ENCODE measurements at regions of chr2 and their contacts with region 1.

Region 1: DNA sequence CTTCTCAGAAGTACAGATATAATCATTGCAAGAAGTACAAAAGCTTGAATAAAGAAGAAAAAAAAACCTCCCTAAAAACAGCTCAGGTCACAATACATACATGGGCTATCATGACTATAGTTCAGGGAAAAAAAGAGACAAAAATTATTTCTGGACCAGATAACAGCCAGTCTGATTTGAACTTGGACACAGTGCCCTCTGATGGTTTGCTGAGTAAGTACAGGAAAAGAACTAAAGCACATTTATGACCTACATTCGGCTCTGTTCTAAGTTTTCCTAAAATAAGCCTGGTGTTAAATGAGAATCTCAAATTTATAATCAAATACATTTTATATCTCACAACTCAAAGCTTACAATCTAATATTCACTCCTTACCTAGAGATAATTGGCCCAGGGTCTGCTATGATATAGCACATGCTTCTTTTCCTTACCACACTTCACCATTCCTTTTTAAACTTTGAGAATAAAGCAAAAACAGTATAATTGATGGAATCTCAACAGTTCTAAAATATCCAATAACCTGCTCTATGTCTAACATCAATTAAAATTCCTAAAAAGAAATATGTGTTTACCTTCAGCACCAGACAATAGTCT is 81.1 kb downstream of the RAPH1 start:
- DNase-seq: peak; percentile 45
- ATAC-seq: peak; percentile 77
- H3K4me3 ChIP-seq: no peak overlapping the region
- H3K27ac ChIP-seq: no peak overlapping the region
- H3K4me1 ChIP-seq: peaks cover 11 to 15% of the 10 kb centered on the region in 2 experiments
- H3K27me3 ChIP-seq: no peaks in the 10 kb centered on the region
- CTCF ChIP-seq: peak; percentile 61 to 82 (median 65)
- POLR2A ChIP-seq: no peak
- RAD21 ChIP-seq: peak; percentile 88

Region 2: DNA sequence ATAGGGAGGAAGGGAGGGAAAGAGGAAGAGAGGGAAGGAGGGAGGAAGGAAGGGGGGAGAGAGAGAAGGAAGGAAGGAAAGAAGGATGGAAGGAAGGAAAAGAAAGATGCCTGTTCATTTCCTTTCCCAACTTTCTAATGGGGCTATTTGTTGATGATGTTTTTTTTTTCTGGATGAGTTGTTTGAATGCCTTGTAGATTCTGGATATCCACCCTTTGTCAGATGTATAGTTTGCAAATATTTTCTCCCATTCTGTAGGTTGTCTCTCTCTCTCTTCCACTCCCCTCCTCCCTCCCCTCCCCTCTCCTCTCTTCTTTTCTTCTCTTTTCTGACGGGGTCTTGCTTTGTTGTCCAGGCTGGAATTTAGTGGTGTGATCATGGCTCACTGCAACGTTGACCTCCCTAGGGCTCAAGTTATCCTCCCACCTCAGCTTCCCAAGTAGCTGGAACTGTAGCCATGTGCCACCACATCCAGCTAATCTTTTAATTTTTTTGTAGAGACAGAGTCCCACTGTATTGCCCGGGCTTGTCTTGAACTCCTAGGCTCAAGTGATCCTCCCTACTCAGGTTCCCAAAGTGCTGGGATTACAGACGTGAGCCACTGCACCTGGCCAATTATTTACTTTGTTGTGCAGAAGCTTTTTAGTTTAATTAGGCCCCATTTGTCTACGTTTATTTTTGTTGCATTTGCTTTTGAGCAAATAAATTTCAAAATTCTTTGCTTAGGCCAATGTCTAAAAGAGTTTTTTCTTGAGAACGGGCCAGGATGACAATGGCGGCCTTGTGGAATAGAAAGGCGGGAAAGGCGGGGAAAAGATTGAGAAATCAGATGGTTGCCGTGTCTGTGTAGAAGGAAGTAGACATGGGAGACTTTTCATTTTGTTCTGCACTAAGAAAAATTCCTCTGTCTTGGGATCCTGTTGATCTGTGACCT is 876.4 kb before region 1 on chr2:
- CTCF ChIA-PET with region 1: no interaction called
- POLR2A ChIA-PET with region 1: no interaction called
- RAD21 ChIA-PET with region 1: no interaction called
- intact Hi-C with region 1: loop called (anchors 1 kb)
- DNase-seq: no peak
- ATAC-seq: no peak
- H3K4me3 ChIP-seq: no peak overlapping the region
- H3K27ac ChIP-seq: no peak overlapping the region
- H3K4me1 ChIP-seq: no peaks in the 10 kb centered on the region
- H3K27me3 ChIP-seq: no peaks in the 10 kb centered on the region
- CTCF ChIP-seq: no peak
- POLR2A ChIP-seq: no peak
- RAD21 ChIP-seq: no peak

Region 3: GRCh38 chr2:202831242-202832220 is 622.4 kb before region 1 on chr2:
- CTCF ChIA-PET with region 1: no interaction called
- POLR2A ChIA-PET with region 1: no interaction called
- RAD21 ChIA-PET with region 1: no interaction called
- intact Hi-C with region 1: loop called (anchors 1 kb)
- DNase-seq: peak; percentile 61
- ATAC-seq: peak; percentile 98
- H3K4me3 ChIP-seq: peak overlapping the region in 1 of 2 experiments; percentile 9; a peak in 1 of 4 replicates
- H3K27ac ChIP-seq: no peak overlapping the region
- H3K4me1 ChIP-seq: peaks cover 3 to 10% of the 10 kb centered on the region in 2 experiments; a peak in 3 of 4 replicates
- H3K27me3 ChIP-seq: no peaks in the 10 kb centered on the region
- CTCF ChIP-seq: peak; percentile 79 to 89 (median 82)
- POLR2A ChIP-seq: no peak
- RAD21 ChIP-seq: peak; percentile 96

Region 4: DNA sequence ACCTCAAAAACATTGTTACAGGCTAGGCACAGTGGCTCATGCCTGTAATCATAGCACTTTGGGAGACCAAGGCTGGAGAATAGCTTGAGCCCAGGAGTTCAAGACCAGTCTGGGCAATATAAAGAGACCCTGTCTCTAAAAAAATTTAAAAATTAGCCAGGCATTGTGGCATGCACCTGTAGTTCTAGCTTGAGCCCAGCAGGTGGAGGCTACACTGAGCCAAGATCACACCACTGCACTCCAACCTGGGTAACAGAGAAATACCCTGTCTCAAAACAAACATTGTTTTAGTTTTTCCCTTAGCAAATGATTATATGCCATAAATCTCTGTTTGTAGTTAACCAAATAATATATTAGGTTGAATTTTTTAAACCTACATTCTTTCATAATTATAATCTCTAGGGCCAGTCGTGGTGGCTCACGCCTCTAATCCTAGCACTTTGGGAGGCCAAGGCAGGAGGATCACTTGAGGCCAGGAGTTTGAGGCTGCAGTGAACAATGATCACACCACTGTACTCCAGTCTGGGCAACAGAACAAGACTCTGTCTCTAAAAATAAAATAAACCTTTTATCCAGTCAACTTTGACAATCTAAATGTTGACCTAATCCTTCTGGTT is 228.4 kb before region 1 on chr2:
- CTCF ChIA-PET with region 1: interaction called, 4 read pairs
- POLR2A ChIA-PET with region 1: no interaction called
- RAD21 ChIA-PET with region 1: no interaction called
- intact Hi-C with region 1: loop called (anchors 1 kb)
- DNase-seq: peak; percentile 13
- ATAC-seq: peak; percentile 90
- H3K4me3 ChIP-seq: no peak overlapping the region
- H3K27ac ChIP-seq: no peak overlapping the region
- H3K4me1 ChIP-seq: no peaks in the 10 kb centered on the region
- H3K27me3 ChIP-seq: no peaks in the 10 kb centered on the region
- CTCF ChIP-seq: peak; percentile 56 to 82 (median 79); a peak in 5 of 6 replicates
- POLR2A ChIP-seq: no peak
- RAD21 ChIP-seq: peak; percentile 70

Region 5: DNA sequence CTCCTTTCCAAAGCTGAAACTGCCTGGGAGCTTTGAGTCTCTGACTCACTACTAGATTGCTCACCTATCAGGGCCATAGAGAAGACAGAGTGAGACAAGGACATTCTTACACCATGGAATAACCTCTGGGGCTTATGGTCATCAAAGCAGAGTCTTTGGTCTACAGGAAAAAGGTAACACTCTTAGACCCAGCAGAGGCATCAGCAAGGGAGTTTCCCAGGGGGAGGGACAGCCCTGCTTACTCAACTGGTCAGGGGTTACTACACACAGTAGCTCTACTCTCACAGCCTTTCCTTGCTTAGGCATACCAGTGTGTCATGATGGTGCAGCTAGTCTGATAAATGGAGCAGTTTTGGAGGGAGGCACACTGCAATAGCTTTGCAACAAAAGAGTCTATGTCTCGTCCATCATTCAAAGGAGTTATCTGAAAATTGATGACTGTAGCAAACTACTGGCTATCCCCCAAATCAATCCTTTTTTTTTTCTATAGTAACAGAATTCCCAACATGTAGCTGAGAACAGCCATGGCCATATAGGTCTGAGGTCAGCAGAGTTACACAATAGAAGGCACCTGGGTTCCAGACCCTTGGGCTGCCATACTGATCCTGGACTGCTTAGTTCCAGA is 230.1 kb after region 1 on chr2:
- CTCF ChIA-PET with region 1: no interaction called
- POLR2A ChIA-PET with region 1: no interaction called
- RAD21 ChIA-PET with region 1: no interaction called
- intact Hi-C with region 1: no loop called
- DNase-seq: no peak
- ATAC-seq: no peak
- H3K4me3 ChIP-seq: no peak overlapping the region
- H3K27ac ChIP-seq: no peak overlapping the region
- H3K4me1 ChIP-seq: no peaks in the 10 kb centered on the region
- H3K27me3 ChIP-seq: no peaks in the 10 kb centered on the region
- CTCF ChIP-seq: no peak
- POLR2A ChIP-seq: no peak
- RAD21 ChIP-seq: no peak

Measured in HCT116 (cell line).